CD8-positive, alpha-beta T cell (primary cell): ENCODE measurements at regions of chr17 and their contacts with region 1.

Region 1: DNA sequence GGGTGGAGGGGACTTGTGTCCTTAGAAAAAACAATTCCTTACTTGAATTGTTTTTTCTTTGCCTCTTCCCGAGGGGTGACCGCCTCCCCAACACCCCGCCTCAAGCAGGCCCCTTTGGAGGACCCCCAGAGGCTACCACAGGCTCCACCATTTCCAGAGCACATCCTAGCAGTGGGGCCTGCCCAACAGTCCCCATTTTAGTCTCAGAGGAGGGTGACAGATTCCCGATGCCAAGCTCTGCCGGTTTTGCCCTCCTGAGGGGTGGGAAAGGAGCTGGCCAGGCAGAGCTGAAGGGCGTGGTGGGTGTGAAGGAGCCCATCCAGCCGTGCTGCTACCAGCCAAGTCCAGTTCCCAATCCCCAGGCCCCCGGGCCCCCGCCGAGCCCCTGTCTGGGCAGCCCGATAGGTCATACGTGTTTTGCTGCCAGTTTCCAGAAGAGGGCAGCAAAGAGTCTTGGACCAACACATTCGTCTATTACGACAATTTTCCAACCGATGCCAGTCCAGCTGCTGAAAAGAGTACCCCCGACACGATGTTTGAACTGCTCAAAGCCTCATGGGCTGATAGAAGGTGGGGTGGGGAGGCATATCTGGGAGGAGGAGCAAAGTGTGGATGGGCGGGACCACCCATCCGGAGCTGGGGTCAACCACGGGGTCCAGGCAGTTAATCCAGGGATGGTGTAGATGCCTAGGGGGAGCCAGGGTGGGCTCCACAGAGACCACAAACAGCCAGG is 18.8 kb upstream of the GAA start:
- DNase-seq: peak; percentile 24 to 80 (median 60)
- ATAC-seq: peak; percentile 66
- H3K4me3 ChIP-seq: no peak overlapping the region
- H3K4me3 Mint-ChIP-seq: no peak overlapping the region
- H3K27ac ChIP-seq: no peak overlapping the region
- H3K27ac Mint-ChIP-seq: no peak overlapping the region
- H3K4me1 ChIP-seq: peaks cover 7% of the 10 kb centered on the region
- H3K4me1 Mint-ChIP-seq: peaks cover 2% of the 10 kb centered on the region
- H3K27me3 ChIP-seq: no peaks in the 10 kb centered on the region
- H3K27me3 Mint-ChIP-seq: peaks cover 8% of the 10 kb centered on the region
- CTCF ChIP-seq: peak; percentile 82

Region 2: GRCh38 chr17:79974566-79975497 is 107.7 kb before region 1 on chr17:
- CTCF ChIA-PET with region 1: no interaction called
- POLR2A ChIA-PET with region 1: no interaction called
- intact Hi-C with region 1: no loop called
- DNase-seq: no peak
- ATAC-seq: no peak
- H3K4me3 ChIP-seq: no peak overlapping the region
- H3K4me3 Mint-ChIP-seq: no peak overlapping the region
- H3K27ac ChIP-seq: no peak overlapping the region
- H3K27ac Mint-ChIP-seq: no peak overlapping the region
- H3K4me1 ChIP-seq: peaks cover 4% of the 10 kb centered on the region
- H3K4me1 Mint-ChIP-seq: peaks cover 7% of the 10 kb centered on the region
- H3K27me3 ChIP-seq: no peaks in the 10 kb centered on the region
- H3K27me3 Mint-ChIP-seq: no peaks in the 10 kb centered on the region
- CTCF ChIP-seq: no peak

Region 3: DNA sequence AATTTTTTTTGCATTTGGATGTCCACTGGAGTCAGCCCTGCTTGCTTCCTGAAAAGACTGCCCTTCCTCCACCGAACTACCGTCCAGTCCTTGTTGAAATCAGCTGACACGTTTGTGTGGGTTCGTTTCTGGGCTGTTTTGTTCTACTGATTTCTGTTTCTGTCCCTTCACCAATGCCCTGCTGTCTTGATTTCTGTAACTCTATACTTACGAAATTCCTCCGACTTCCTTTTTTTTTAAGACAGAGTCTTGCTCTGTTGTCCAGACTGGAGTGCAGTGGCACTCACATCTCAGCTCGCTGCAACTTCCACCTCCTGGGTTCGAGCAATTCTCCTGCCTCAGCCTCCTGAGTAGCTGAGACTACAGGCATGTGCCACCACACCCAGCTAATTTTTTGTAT is 10.4 kb after region 1 on chr17:
- CTCF ChIA-PET with region 1: interaction called, 11 read pairs
- POLR2A ChIA-PET with region 1: no interaction called
- intact Hi-C with region 1: no loop called
- DNase-seq: no peak
- ATAC-seq: no peak
- H3K4me3 ChIP-seq: no peak overlapping the region
- H3K4me3 Mint-ChIP-seq: no peak overlapping the region
- H3K27ac ChIP-seq: no peak overlapping the region
- H3K27ac Mint-ChIP-seq: no peak overlapping the region
- H3K4me1 ChIP-seq: no peaks in the 10 kb centered on the region
- H3K4me1 Mint-ChIP-seq: no peaks in the 10 kb centered on the region
- H3K27me3 ChIP-seq: no peaks in the 10 kb centered on the region
- H3K27me3 Mint-ChIP-seq: peaks cover 2% of the 10 kb centered on the region
- CTCF ChIP-seq: no peak

Region 4: GRCh38 chr17:80114758-80115157 is 32.2 kb after region 1 on chr17:
- CTCF ChIA-PET with region 1: interaction called, 3 read pairs
- POLR2A ChIA-PET with region 1: no interaction called
- intact Hi-C with region 1: loop called in 1 of 2 experiments (anchors 2 kb)
- DNase-seq: no peak
- ATAC-seq: no peak
- H3K4me3 ChIP-seq: no peak overlapping the region
- H3K4me3 Mint-ChIP-seq: no peak overlapping the region
- H3K27ac ChIP-seq: no peak overlapping the region
- H3K27ac Mint-ChIP-seq: no peak overlapping the region
- H3K4me1 ChIP-seq: no peaks in the 10 kb centered on the region
- H3K4me1 Mint-ChIP-seq: no peaks in the 10 kb centered on the region
- H3K27me3 ChIP-seq: no peaks in the 10 kb centered on the region
- H3K27me3 Mint-ChIP-seq: no peaks in the 10 kb centered on the region
- CTCF ChIP-seq: no peak

Region 5: GRCh38 chr17:80254396-80255251 is 172.1 kb after region 1 on chr17:
- CTCF ChIA-PET with region 1: interaction called, 7 read pairs
- POLR2A ChIA-PET with region 1: no interaction called
- intact Hi-C with region 1: loop called in 1 of 2 experiments (anchors 2 kb)
- DNase-seq: peak in 5 of 9 experiments; percentile 33 to 75 (median 54)
- ATAC-seq: peak; percentile 34
- H3K4me3 ChIP-seq: no peak overlapping the region
- H3K4me3 Mint-ChIP-seq: no peak overlapping the region
- H3K27ac ChIP-seq: peak overlapping the region in 1 of 2 experiments; percentile 51
- H3K27ac Mint-ChIP-seq: peak overlapping the region; percentile 85
- H3K4me1 ChIP-seq: peaks cover 7% of the 10 kb centered on the region
- H3K4me1 Mint-ChIP-seq: peaks cover 28% of the 10 kb centered on the region
- H3K27me3 ChIP-seq: no peaks in the 10 kb centered on the region
- H3K27me3 Mint-ChIP-seq: no peaks in the 10 kb centered on the region
- CTCF ChIP-seq: no peak